ENCODE measurements at regions of chr4 and their contacts with region 1.

Region 1: DNA sequence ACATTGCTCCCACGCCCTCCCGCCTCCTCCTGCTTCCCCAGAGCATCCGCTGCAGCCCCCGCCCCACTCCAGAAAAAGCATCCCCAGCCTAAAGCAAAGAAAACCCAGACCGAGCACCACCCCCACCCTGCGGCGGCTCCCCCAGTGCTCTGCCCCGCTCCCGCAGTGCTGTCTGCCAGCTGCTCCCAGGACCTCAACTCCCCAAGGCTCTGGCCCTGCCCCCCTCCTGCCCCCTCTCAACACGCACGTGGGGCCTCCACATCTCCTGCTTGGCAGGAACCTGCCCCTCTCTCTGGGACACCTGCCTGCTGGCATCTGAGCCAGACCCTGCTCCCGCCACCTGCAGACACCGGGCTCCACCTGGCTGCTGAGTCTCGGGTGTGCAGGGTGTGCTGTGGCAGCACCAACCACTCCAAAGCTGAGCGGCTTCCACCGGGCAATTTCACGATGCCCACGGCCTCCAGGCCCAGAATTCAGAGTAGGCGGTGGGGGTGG is 79.4 kb downstream of the FAM53A start:
- DNase-seq: peak; percentile 63 to 79 (median 74)
- H3K4me3 ChIP-seq: peak overlapping the region; percentile 23 to 31
- H3K4me3 Mint-ChIP-seq: peak overlapping the region; percentile 63 to 81 (median 76)
- H3K27ac ChIP-seq: peak overlapping the region; percentile 21
- H3K27ac Mint-ChIP-seq: peak overlapping the region in 6 of 7 donors; percentile 73 to 96 (median 90)
- H3K4me1 ChIP-seq: peaks cover 36% of the 10 kb centered on the region
- H3K4me1 Mint-ChIP-seq: peaks cover 7 to 30% (median 22%) of the 10 kb centered on the region in 4 donors
- H3K27me3 ChIP-seq: no peaks in the 10 kb centered on the region
- H3K27me3 Mint-ChIP-seq: no peaks in the 10 kb centered on the region

Region 2: DNA sequence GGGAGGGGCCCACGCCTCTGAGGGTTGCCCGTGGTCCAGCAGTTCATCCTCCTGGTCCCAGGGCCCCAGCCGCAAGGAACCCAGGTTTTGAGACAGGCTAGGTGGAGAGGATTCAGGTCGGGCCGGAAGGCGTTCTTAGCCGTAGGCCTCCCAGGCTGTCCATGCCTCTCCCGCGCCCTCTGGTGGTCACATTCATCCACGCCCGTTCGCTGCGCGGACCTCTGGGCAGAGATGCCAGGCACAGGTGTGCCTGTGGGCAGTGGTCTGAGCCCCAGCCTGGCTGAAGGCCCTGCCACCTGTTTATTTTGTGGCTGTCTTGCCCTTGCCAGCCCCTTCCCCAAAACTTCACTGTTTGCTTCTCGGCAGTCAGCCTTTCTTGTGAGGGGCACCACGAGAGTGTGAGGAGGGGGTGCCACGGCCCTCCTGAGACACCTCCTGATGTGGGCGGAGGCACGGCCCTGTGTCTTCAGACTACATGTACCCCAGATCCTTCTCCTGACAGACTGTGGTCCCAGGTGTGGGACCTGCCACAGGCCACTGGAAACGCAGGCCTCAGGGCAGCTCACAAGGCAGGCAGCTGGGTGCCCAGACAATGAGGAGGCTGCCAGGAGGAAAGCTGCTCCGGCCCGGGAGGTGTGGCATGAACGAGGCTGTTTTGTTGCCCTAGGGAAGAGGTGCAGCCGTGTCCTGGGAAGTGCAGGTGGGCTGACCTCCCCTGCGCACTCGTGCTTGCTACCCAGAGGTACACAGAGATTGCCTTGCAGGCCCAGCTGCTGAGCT is 252.7 kb before region 1 on chr4:
- CTCF ChIA-PET with region 1: interaction called, 18 read pairs
- POLR2A ChIA-PET with region 1: interaction called, 15 read pairs
- intact Hi-C with region 1: loop called (anchors 1 kb)
- DNase-seq: peak; percentile 81 to 86 (median 83)
- H3K4me3 ChIP-seq: no peak overlapping the region
- H3K4me3 Mint-ChIP-seq: peak overlapping the region in 1 of 8 donors; percentile 57
- H3K27ac ChIP-seq: no peak overlapping the region
- H3K27ac Mint-ChIP-seq: peak overlapping the region; percentile 68 to 93 (median 85)
- H3K4me1 ChIP-seq: peaks cover 20% of the 10 kb centered on the region
- H3K4me1 Mint-ChIP-seq: peaks cover 16 to 43% (median 20%) of the 10 kb centered on the region in 4 donors
- H3K27me3 ChIP-seq: no peaks in the 10 kb centered on the region
- H3K27me3 Mint-ChIP-seq: no peaks in the 10 kb centered on the region

Region 3: GRCh38 chr4:1579901-1580691 is 24.7 kb before region 1 on chr4:
- CTCF ChIA-PET with region 1: interaction called, 9 read pairs
- POLR2A ChIA-PET with region 1: interaction called, 32 read pairs
- intact Hi-C with region 1: loop called (anchors 1 kb)
- DNase-seq: peak in 4 of 5 donors; percentile 90 to 92 (median 91)
- H3K4me3 ChIP-seq: peak overlapping the region; percentile 29 to 91
- H3K4me3 Mint-ChIP-seq: peak overlapping the region; percentile 72 to 83 (median 78)
- H3K27ac ChIP-seq: peak overlapping the region; percentile 74
- H3K27ac Mint-ChIP-seq: peak overlapping the region; percentile 52 to 85 (median 70)
- H3K4me1 ChIP-seq: peaks cover 6% of the 10 kb centered on the region
- H3K4me1 Mint-ChIP-seq: peaks cover 0 to 7% (median 4%) of the 10 kb centered on the region in 4 donors
- H3K27me3 ChIP-seq: no peaks in the 10 kb centered on the region
- H3K27me3 Mint-ChIP-seq: no peaks in the 10 kb centered on the region

Region 4: DNA sequence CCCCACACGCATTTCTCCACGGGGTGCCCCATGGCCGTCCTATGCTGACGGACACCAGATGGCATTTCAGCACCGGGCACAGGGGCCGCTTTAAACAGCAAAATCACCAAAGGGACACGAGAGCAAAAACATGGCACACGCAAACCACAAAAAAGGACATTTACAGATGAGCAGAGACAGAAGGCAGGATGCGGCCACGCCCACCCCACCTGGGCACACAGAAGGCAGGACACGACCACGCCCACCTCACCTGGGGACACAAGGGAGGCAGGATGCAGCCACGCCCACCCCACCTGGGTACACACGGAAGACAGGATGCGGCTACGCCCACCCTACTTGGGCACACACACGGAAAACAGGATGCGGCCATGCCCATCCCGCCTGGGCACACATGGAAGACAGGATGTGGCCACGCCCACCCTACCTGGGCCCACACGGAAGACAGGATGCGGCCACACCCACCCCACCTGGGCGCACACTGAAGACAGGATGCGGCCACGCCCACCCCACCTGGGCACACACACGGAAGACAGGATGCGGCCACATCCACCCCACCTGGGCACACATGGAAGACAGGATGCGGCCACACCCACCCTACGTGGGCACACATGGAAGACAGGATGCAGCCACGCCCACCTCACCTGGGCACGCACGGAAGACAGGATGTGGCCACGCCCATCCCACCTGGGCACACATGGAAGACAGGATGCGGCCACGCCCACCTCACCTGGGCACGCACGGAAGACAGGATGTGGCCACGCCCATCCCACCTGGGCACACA is 10.3 kb after region 1 on chr4:
- CTCF ChIA-PET with region 1: interaction called, 3 read pairs
- POLR2A ChIA-PET with region 1: interaction called, 10 read pairs
- intact Hi-C with region 1: loop called (anchors 1 kb)
- DNase-seq: peak in 3 of 5 donors; percentile 41 to 45 (median 42)
- H3K4me3 ChIP-seq: no peak overlapping the region
- H3K4me3 Mint-ChIP-seq: peak overlapping the region in 7 of 8 donors; percentile 11 to 77 (median 73)
- H3K27ac ChIP-seq: no peak overlapping the region
- H3K27ac Mint-ChIP-seq: peak overlapping the region; percentile 63 to 97 (median 84)
- H3K4me1 ChIP-seq: peaks cover 27% of the 10 kb centered on the region
- H3K4me1 Mint-ChIP-seq: peaks cover 21 to 40% (median 27%) of the 10 kb centered on the region in 4 donors
- H3K27me3 ChIP-seq: no peaks in the 10 kb centered on the region
- H3K27me3 Mint-ChIP-seq: peaks cover 0 to 2% of the 10 kb centered on the region in 2 donors

Region 5: DNA sequence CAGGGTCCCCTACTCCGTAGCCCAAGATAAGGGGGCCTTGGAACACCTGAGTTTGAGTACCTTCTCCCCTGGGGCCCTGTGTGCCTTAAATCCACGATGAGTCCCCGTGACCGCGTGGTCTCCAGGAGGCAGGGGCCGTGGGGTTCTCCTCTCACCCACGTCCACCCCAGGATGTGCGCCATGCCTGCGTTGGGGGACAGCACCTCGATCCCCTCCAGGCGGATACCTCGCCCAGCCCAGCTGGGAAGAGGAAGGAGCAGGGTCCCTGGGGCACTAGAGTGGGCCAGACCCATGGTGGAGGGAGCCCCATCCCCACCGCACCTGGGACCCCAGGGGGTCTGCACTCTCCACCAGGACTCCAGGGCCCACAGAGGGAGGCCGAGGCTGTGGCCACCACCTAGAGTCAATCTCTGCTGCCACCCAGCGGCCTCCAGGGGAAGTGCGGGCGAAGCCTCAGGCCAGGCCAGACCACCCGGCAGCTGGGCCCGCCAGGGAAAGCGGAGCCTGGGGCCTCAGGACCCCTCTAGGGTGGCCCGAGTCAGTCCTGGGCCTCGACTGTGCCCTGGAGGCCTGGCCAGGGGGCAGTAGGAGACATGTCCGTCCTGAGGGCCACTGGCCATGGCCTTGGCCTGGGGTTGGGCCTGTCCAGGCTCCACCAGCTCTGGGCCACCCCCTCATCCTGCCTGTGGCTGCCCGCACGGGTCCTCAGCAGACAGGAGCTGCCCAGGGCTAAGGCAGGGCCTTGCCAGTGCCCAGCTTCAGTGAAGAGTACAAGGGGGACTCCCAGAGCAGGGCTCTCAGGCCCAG is 24.3 kb after region 1 on chr4:
- CTCF ChIA-PET with region 1: interaction called, 14 read pairs
- POLR2A ChIA-PET with region 1: interaction called, 9 read pairs
- intact Hi-C with region 1: no loop called
- DNase-seq: peak; percentile 46 to 72 (median 64)
- H3K4me3 ChIP-seq: no peak overlapping the region
- H3K4me3 Mint-ChIP-seq: no peak overlapping the region
- H3K27ac ChIP-seq: no peak overlapping the region
- H3K27ac Mint-ChIP-seq: no peak overlapping the region
- H3K4me1 ChIP-seq: no peaks in the 10 kb centered on the region
- H3K4me1 Mint-ChIP-seq: no peaks in the 10 kb centered on the region
- H3K27me3 ChIP-seq: no peaks in the 10 kb centered on the region
- H3K27me3 Mint-ChIP-seq: no peaks in the 10 kb centered on the region

Region 6: GRCh38 chr4:1802151-1802715 is 197.5 kb after region 1 on chr4:
- CTCF ChIA-PET with region 1: no interaction called
- POLR2A ChIA-PET with region 1: no interaction called
- intact Hi-C with region 1: no loop called
- DNase-seq: peak in 1 of 5 donors; percentile 25
- H3K4me3 ChIP-seq: no peak overlapping the region
- H3K4me3 Mint-ChIP-seq: no peak overlapping the region
- H3K27ac ChIP-seq: no peak overlapping the region
- H3K27ac Mint-ChIP-seq: no peak overlapping the region
- H3K4me1 ChIP-seq: no peaks in the 10 kb centered on the region
- H3K4me1 Mint-ChIP-seq: no peaks in the 10 kb centered on the region
- H3K27me3 ChIP-seq: no peaks in the 10 kb centered on the region
- H3K27me3 Mint-ChIP-seq: peaks cover 5 to 6% of the 10 kb centered on the region in 2 donors